ENCODE measurements at regions of chr18 and their contacts with region 1.

Region 1: GRCh38 chr18:46250084-46250811 is 146.1 kb downstream of the HAUS1 start:
- DNase-seq: peak; percentile 62
- H3K4me3 Mint-ChIP-seq: peak overlapping the region; percentile 42
- H3K27ac Mint-ChIP-seq: peak overlapping the region; percentile 79
- H3K4me1 Mint-ChIP-seq: peaks cover 57% of the 10 kb centered on the region
- H3K27me3 Mint-ChIP-seq: no peaks in the 10 kb centered on the region

Region 2: GRCh38 chr18:46109386-46109785 is 140.9 kb before region 1 on chr18:
- CTCF ChIA-PET with region 1: no interaction called
- POLR2A ChIA-PET with region 1: no interaction called
- intact Hi-C with region 1: loop called (anchors 5 kb)
- DNase-seq: no peak
- H3K4me3 Mint-ChIP-seq: no peak overlapping the region
- H3K27ac Mint-ChIP-seq: no peak overlapping the region
- H3K4me1 Mint-ChIP-seq: peaks cover 25% of the 10 kb centered on the region
- H3K27me3 Mint-ChIP-seq: no peaks in the 10 kb centered on the region

Region 3: DNA sequence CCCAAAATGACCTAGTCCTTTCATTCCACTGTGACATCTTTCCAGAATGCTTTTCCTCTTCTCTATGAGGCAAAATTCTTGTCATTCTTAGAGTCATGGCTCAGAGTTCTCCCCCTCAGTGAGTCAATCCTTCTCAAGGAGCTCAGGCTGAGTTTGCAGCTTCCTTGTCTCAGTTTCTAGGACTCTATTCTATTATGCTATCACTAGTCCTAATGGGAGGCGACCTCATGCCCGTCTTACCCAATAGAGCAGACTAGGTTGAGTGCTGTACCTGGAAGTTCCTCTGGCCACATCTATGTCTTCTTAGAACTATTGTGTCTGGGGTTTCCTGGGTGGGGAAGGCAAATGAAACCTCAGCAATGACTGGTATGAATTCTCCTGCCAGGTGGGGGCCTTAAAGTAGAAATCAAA is 94.6 kb before region 1 on chr18:
- CTCF ChIA-PET with region 1: no interaction called
- POLR2A ChIA-PET with region 1: interaction called, 3 read pairs
- intact Hi-C with region 1: loop called (anchors 1 kb)
- DNase-seq: peak; percentile 67
- H3K4me3 Mint-ChIP-seq: peak overlapping the region; percentile 10
- H3K27ac Mint-ChIP-seq: peak overlapping the region; percentile 94
- H3K4me1 Mint-ChIP-seq: peaks cover 64% of the 10 kb centered on the region
- H3K27me3 Mint-ChIP-seq: no peaks in the 10 kb centered on the region

Region 4: GRCh38 chr18:46213295-46213694 is 37.0 kb before region 1 on chr18:
- CTCF ChIA-PET with region 1: interaction called, 8 read pairs
- POLR2A ChIA-PET with region 1: interaction called, 3 read pairs
- intact Hi-C with region 1: loop called (anchors 1 kb)
- DNase-seq: no peak
- H3K4me3 Mint-ChIP-seq: no peak overlapping the region
- H3K27ac Mint-ChIP-seq: no peak overlapping the region
- H3K4me1 Mint-ChIP-seq: peaks cover 86% of the 10 kb centered on the region
- H3K27me3 Mint-ChIP-seq: no peaks in the 10 kb centered on the region

Region 5: GRCh38 chr18:46226461-46226860 is 23.8 kb before region 1 on chr18:
- CTCF ChIA-PET with region 1: no interaction called
- POLR2A ChIA-PET with region 1: interaction called, 3 read pairs
- intact Hi-C with region 1: loop called (anchors 1 kb)
- DNase-seq: no peak
- H3K4me3 Mint-ChIP-seq: no peak overlapping the region
- H3K27ac Mint-ChIP-seq: no peak overlapping the region
- H3K4me1 Mint-ChIP-seq: peaks cover 72% of the 10 kb centered on the region
- H3K27me3 Mint-ChIP-seq: no peaks in the 10 kb centered on the region

Region 6: GRCh38 chr18:46264235-46264893 is 14.1 kb after region 1 on chr18:
- CTCF ChIA-PET with region 1: interaction called, 3 read pairs
- POLR2A ChIA-PET with region 1: interaction called, 3 read pairs
- intact Hi-C with region 1: loop called (anchors 1 kb)
- DNase-seq: no peak
- H3K4me3 Mint-ChIP-seq: no peak overlapping the region
- H3K27ac Mint-ChIP-seq: no peak overlapping the region
- H3K4me1 Mint-ChIP-seq: peaks cover 57% of the 10 kb centered on the region
- H3K27me3 Mint-ChIP-seq: no peaks in the 10 kb centered on the region

Region 7: DNA sequence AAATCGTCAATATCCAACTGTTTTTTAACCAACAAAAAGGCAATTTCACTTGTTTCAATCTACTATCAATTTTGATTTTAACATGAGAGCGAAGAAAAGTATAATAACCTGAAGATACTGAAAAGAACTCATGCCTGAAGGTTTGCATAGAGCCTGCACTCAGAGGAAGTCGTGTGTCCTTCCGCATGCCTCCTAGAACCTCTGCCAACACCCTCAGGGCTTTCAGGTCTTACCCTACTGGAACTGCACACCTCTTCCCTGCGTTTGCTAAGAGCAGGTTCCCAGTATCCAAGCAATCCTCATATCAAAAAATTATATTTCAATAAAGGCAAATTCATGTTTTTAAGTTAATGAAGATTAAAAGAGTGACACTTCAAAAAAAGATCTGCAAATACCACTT is 592.3 kb after region 1 on chr18:
- CTCF ChIA-PET with region 1: no interaction called
- POLR2A ChIA-PET with region 1: no interaction called
- intact Hi-C with region 1: no loop called
- DNase-seq: no peak
- H3K4me3 Mint-ChIP-seq: no peak overlapping the region
- H3K27ac Mint-ChIP-seq: no peak overlapping the region
- H3K4me1 Mint-ChIP-seq: no peaks in the 10 kb centered on the region
- H3K27me3 Mint-ChIP-seq: no peaks in the 10 kb centered on the region